Dorsolateral prefrontal cortex (tissue), 120 donors: ENCODE measurements at regions of chr9 and their contacts with region 1.

Region 1: GRCh38 chr9:136363606-136364370 is at the start of gene DNLZ:
- DNase-seq: peak in 8 of 10 donors; percentile 61 to 86 (median 72)
- H3K4me3 ChIP-seq: peak within 1 kb of the TSS; percentile 47 to 97 (median 77)
- H3K27ac ChIP-seq: peak within 1 kb of the TSS in 55 of 59 donors; percentile 23 to 95 (median 84)
- H3K27me3 ChIP-seq: no peaks in the 10 kb centered on the region
- CTCF ChIP-seq: peak; percentile 84 to 100 (median 96)
- total RNA-seq, gene DNLZ: 10.7 to 49.9 (median 18.5) TPM

Region 2: GRCh38 chr9:136312436-136312835 is 51.4 kb before region 1 on chr9:
- intact Hi-C with region 1: loop called in 1 of 2 experiments (anchors 1 kb)
- DNase-seq: peak in 5 of 10 donors; percentile 17 to 76 (median 46)
- H3K4me3 ChIP-seq: no peak overlapping the region
- H3K27ac ChIP-seq: no peak overlapping the region
- H3K27me3 ChIP-seq: peaks cover 0 to 17% (median 0%) of the 10 kb centered on the region in 45 donors
- CTCF ChIP-seq: peak in 55 of 56 donors; percentile 37 to 85 (median 68)

Region 3: GRCh38 chr9:136327313-136327974 is 36.3 kb before region 1 on chr9 and contains the start of gene GPSM1:
- intact Hi-C with region 1: loop called in 1 of 2 experiments (anchors 5 kb)
- DNase-seq: peak in 4 of 10 donors; percentile 37 to 80 (median 55)
- H3K4me3 ChIP-seq: peak within 1 kb of the TSS; percentile 57 to 87 (median 75)
- H3K27ac ChIP-seq: peak within 1 kb of the TSS in 57 of 59 donors; percentile 40 to 94 (median 79)
- H3K27me3 ChIP-seq: no peaks in the 10 kb centered on the region
- CTCF ChIP-seq: no peak
- total RNA-seq, gene GPSM1: 31.5 to 79.7 (median 44.8) TPM

Region 4: DNA sequence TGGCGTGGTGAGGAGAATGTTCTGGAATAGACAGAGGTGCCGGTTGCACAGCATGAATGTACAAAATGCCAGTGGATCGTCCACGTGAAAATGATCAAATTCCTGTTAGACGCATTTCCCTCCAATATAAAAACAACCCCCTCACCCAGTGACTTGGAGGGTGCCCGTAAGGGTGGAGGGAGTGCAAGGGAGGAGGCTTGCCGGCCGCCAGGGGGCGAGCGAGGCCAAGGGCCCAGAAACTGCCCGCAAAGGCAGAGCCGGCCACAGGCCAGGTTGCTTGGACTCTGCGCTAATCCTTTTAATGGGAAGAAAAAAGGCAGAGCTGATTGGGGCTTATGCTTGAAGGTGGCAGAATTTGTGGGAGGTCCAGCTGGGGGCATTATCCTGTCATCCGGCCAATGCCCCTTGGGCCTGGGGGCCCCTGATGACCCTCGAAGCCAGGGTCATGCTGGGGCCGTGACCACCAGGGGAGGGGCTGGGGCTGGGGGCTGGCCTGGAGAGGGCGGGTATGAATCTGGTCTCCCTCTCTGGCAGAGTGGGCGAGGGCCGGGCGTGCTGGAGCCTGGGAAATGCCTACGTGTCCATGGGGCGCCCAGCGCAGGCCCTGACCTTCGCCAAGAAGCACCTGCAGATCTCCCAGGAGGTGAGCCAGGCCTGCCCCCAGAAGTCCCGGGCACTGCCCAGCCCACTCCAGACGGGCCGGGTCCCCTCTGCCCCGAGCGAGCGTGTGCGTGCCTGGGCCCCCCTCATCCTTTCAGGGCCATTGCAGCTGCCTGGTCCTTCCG is 24.4 kb before region 1 on chr9:
- intact Hi-C with region 1: loop called in 1 of 2 experiments (anchors 2 kb)
- DNase-seq: peak in 6 of 10 donors; percentile 52 to 81 (median 69)
- H3K4me3 ChIP-seq: no peak overlapping the region
- H3K27ac ChIP-seq: peak overlapping the region in 18 of 59 donors; percentile 2 to 76 (median 42)
- H3K27me3 ChIP-seq: no peaks in the 10 kb centered on the region
- CTCF ChIP-seq: peak; percentile 21 to 92 (median 79)

Region 5: GRCh38 chr9:136345281-136346156 is 18.3 kb before region 1 on chr9:
- intact Hi-C with region 1: loop called (anchors 1 to 2 kb)
- DNase-seq: peak; percentile 73 to 90 (median 87)
- H3K4me3 ChIP-seq: peak overlapping the region in 48 of 59 donors; percentile 3 to 61 (median 30)
- H3K27ac ChIP-seq: peak overlapping the region in 57 of 59 donors; percentile 54 to 96 (median 88)
- H3K27me3 ChIP-seq: no peaks in the 10 kb centered on the region
- CTCF ChIP-seq: peak in 49 of 56 donors; percentile 13 to 65 (median 39)